ENCODE measurements at regions of chr14 and their contacts with region 1.

Region 1: DNA sequence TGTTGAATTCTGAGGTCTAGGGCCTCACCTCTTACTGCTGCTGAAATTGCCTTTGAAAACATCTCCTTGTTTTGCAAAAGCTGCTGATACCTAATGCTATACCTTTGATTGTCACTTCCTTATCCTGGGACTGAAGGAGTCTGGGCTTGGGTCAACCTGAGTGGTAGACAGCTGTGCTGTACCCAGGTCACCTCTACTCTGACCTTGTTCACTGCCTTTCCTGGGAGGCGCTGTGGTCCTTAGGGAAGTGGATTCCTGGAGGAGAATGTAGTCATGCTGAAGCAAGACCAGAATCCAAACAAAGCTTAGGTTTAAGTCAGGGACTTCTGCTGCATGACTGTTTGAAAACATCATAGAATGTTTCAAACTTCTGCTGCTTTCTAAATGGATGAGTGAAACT is 191.4 kb downstream of the SNAPC1 start:
- DNase-seq: no peak
- ATAC-seq: peak; percentile 37; the same call in 1 of the 2 replicates
- H3K4me3 ChIP-seq: no peak overlapping the region
- H3K27ac ChIP-seq: no peak overlapping the region
- H3K4me1 ChIP-seq: no peaks in the 10 kb centered on the region
- H3K27me3 ChIP-seq: no peaks in the 10 kb centered on the region
- CTCF ChIP-seq: 0 out of 2 replicates have a peak, but pooled peaks have one; percentile 17

Region 2: GRCh38 chr14:61934385-61934784 is 19.2 kb before region 1 on chr14:
- CTCF ChIA-PET with region 1: no interaction called
- POLR2A ChIA-PET with region 1: no interaction called
- intact Hi-C with region 1: loop called (anchors 2 kb)
- DNase-seq: peak; percentile 98
- ATAC-seq: peak; percentile 92
- H3K4me3 ChIP-seq: no peak overlapping the region
- H3K27ac ChIP-seq: peak overlapping the region; percentile 93
- H3K4me1 ChIP-seq: peaks cover 52% of the 10 kb centered on the region
- H3K27me3 ChIP-seq: no peaks in the 10 kb centered on the region
- CTCF ChIP-seq: no peak

Measured in PC-3 (cell line).